ENCODE measurements at regions of chr14 and their contacts with region 1.

Region 1: DNA sequence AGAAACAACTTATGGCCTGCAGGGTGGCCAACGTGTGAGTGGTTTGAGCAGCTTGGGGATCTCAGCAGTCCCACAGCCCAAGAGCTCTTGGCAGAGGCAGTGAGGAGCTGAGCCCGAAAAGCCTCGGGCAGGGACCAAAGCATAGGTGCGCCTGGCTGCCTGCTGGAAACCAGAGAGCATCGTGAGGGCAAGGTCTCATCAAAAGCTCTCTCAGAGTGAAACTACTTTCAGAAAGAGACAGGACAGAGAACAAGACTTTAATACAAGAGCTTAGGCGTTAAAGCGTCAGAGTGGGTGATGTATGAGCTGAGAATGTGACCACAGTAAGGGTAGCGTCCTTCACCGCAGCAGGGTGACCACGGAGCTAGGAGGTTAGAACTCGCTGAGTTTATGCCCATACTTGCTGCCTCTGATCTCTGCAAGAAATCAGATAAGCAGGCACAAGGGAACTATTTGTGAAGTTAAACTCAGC is 30.8 kb downstream of the LGMN start:
- DNase-seq: no peak
- ATAC-seq: no peak
- H3K4me3 ChIP-seq: no peak overlapping the region
- H3K27ac ChIP-seq: no peak overlapping the region
- H3K4me1 ChIP-seq: peaks cover 0 to 7% of the 10 kb centered on the region in 2 experiments; a peak in 2 of 4 replicates
- H3K27me3 ChIP-seq: no peaks in the 10 kb centered on the region
- CTCF ChIP-seq: no peak
- POLR2A ChIP-seq: no peak
- RAD21 ChIP-seq: no peak

Region 2: DNA sequence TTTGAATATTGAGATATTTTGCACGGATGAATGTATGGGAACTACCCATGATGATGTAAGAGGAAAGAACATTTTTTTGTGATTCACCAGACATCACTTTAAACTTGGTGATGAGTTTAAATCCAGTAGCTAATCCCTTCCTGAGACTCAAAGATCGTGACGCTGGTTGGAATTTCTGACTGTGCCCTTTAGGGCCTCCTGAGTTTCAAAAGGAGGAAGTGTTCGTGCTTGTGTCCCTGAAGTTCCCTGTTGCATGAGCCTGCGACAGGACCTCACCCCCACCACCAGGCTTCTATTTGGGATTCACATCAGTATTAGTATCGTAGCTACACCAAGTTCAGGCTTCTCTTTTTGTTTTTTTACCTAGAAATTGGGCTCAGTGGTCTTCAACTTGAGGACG is 222.6 kb before region 1 on chr14:
- CTCF ChIA-PET with region 1: no interaction called
- POLR2A ChIA-PET with region 1: no interaction called
- RAD21 ChIA-PET with region 1: no interaction called
- intact Hi-C with region 1: no loop called
- DNase-seq: no peak
- ATAC-seq: no peak
- H3K4me3 ChIP-seq: no peak overlapping the region
- H3K27ac ChIP-seq: no peak overlapping the region
- H3K4me1 ChIP-seq: peaks cover 0 to 7% of the 10 kb centered on the region in 2 experiments; a peak in 1 of 4 replicates
- H3K27me3 ChIP-seq: no peaks in the 10 kb centered on the region
- CTCF ChIP-seq: no peak
- POLR2A ChIP-seq: no peak
- RAD21 ChIP-seq: no peak

Region 3: GRCh38 chr14:92585981-92586937 is 131.3 kb before region 1 on chr14:
- CTCF ChIA-PET with region 1: no interaction called
- POLR2A ChIA-PET with region 1: no interaction called
- RAD21 ChIA-PET with region 1: no interaction called
- intact Hi-C with region 1: no loop called
- DNase-seq: no peak
- ATAC-seq: no peak
- H3K4me3 ChIP-seq: no peak overlapping the region
- H3K27ac ChIP-seq: no peak overlapping the region
- H3K4me1 ChIP-seq: peaks cover 0 to 3% of the 10 kb centered on the region in 2 experiments; a peak in 1 of 4 replicates
- H3K27me3 ChIP-seq: no peaks in the 10 kb centered on the region
- CTCF ChIP-seq: no peak
- POLR2A ChIP-seq: no peak
- RAD21 ChIP-seq: no peak

Region 4: DNA sequence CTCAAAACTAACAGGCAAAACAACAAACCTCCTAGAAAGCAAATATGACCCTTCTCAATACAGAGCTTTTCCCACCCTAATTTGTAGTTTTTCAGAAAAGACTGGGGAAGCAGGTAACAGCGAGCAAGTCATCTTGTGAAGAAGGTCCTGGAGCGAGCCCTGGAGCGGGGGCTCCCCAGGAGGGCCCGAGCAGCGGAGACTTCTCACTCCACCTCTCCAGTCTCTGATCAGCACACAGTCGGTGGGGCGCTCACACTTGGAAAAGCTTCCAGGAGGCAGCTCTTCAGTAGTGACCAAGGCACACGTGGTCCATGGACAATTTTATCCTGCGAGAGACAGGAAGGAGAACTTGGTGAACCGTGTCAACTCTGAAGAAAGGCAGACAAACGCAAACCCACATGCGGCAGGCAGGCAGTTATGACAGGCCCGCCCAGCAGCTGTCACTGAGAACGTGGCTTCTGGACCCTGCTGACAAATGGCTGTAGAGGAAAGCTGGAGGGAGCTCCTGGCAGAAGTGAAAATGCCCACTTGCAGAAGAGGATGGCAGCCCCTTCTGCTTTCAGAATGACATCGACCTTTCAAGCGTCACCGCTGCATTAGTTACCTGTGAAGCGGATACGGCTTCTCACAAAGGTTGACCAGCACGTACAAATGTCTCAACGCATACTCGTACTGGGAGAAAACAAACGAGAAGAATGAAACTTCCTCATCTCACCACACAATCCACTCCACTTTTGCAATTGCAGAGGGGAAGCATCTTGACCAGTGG is 13.4 kb before region 1 on chr14:
- CTCF ChIA-PET with region 1: no interaction called
- POLR2A ChIA-PET with region 1: no interaction called
- RAD21 ChIA-PET with region 1: no interaction called
- intact Hi-C with region 1: no loop called
- DNase-seq: no peak
- ATAC-seq: no peak
- H3K4me3 ChIP-seq: no peak overlapping the region
- H3K27ac ChIP-seq: no peak overlapping the region
- H3K4me1 ChIP-seq: peaks cover 6 to 11% of the 10 kb centered on the region in 2 experiments
- H3K27me3 ChIP-seq: no peaks in the 10 kb centered on the region
- CTCF ChIP-seq: no peak
- POLR2A ChIP-seq: no peak
- RAD21 ChIP-seq: no peak

Region 5: GRCh38 chr14:92783816-92784431 is 66.3 kb after region 1 on chr14:
- CTCF ChIA-PET with region 1: interaction called, 27 read pairs
- POLR2A ChIA-PET with region 1: no interaction called
- RAD21 ChIA-PET with region 1: interaction called, 3 to 5 read pairs
- intact Hi-C with region 1: loop called (anchors 1 kb)
- DNase-seq: peak; percentile 62
- ATAC-seq: peak; percentile 73
- H3K4me3 ChIP-seq: no peak overlapping the region
- H3K27ac ChIP-seq: no peak overlapping the region
- H3K4me1 ChIP-seq: peaks cover 6 to 29% of the 10 kb centered on the region in 2 experiments
- H3K27me3 ChIP-seq: no peaks in the 10 kb centered on the region
- CTCF ChIP-seq: peak; percentile 41 to 90 (median 62); a peak in 5 of 6 replicates
- POLR2A ChIP-seq: no peak
- RAD21 ChIP-seq: peak; percentile 87

Measured in HCT116 (cell line).